ENCODE measurements at regions of chr2 and their contacts with region 1.

Region 1: GRCh38 chr2:101831351-101831865 is 133.9 kb downstream of the MAP4K4 start:
- DNase-seq: peak; percentile 49
- H3K27ac ChIP-seq: peak overlapping the region; percentile 34
- CTCF ChIP-seq: peak; percentile 76

Region 2: GRCh38 chr2:101419096-101419663 is 412.2 kb before region 1 on chr2:
- CTCF ChIA-PET with region 1: interaction called, 10 read pairs
- POLR2A ChIA-PET with region 1: no interaction called
- DNase-seq: peak; percentile 70
- H3K27ac ChIP-seq: no peak overlapping the region
- CTCF ChIP-seq: peak; percentile 67